PC-9 (cell line): ENCODE measurements at regions of chr15 and their contacts with region 1.

Region 1: DNA sequence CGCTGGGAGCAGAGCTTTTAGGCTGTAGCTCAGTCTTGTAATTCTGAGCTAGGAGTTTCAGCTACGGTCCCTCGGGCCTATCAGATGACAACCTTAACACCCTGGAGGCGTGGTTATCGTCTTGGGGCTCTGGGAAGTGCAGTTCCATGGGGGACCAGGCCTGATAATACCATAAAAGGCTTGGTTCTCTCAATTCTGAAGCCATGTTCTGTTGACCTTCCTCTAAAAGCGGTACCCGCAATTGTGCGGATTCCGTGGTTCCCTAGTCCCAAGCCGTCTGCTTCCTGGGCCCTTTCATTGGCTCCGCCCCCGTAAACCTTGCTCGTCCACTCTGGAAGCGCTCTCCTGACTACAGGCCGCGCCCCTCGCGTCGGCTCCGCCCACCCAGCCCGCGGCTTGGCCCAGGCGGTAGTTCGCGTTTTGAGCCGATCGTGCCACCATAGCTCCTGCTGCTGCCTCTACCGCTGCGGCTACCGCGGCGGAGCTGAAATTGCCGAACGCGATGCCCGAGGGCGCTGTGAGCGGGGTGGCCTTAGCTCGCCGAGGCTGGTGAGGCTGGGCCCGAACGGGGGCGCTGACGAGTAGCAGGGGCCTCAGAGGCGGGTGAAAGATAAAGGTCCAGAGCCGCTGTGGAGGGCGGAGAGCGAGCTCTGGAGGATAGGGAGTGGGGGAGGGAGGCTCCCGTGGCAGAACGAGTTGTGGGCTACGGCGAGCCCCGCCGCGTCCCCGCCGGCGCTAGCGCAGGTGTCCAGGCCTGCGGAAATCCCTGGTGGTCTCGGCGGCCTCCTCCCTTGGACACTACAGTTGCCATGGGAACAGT is at the start of gene MAPKBP1:
- DNase-seq: peak; percentile 86 to 98
- H3K4me3 ChIP-seq: peak within 1 kb of the TSS; percentile 80
- H3K27ac ChIP-seq: peak within 1 kb of the TSS; percentile 64
- H3K4me1 ChIP-seq: peaks cover 24% of the 10 kb centered on the region
- H3K27me3 ChIP-seq: no peaks in the 10 kb centered on the region
- CTCF ChIP-seq: peak; percentile 63
- total RNA-seq, gene MAPKBP1: 17.6 and 22.9 TPM in 2 replicates

Region 2: DNA sequence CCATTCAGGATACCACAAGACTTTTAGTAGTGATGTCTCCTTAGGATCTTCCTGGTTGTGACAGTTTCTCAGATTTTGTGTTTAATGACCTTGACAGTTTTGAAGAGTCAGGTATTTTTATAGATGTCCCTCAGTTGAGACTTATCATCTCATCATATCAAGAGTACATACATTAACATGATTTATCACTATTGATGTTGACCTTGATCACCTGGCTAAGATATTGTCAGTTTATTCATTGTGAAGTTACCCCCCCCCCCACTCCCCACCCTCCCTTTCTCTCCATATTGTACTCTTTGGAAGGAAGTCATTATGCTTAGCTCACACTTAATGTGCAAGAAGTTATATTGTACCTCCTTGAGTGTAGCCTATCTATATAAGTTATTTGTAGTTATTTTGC is 71.2 kb before region 1 on chr15:
- CTCF ChIA-PET with region 1: no interaction called
- POLR2A ChIA-PET with region 1: no interaction called
- intact Hi-C with region 1: no loop called
- DNase-seq: no peak
- H3K4me3 ChIP-seq: no peak overlapping the region
- H3K27ac ChIP-seq: no peak overlapping the region
- H3K4me1 ChIP-seq: no peaks in the 10 kb centered on the region
- H3K27me3 ChIP-seq: no peaks in the 10 kb centered on the region
- CTCF ChIP-seq: no peak

Region 3: DNA sequence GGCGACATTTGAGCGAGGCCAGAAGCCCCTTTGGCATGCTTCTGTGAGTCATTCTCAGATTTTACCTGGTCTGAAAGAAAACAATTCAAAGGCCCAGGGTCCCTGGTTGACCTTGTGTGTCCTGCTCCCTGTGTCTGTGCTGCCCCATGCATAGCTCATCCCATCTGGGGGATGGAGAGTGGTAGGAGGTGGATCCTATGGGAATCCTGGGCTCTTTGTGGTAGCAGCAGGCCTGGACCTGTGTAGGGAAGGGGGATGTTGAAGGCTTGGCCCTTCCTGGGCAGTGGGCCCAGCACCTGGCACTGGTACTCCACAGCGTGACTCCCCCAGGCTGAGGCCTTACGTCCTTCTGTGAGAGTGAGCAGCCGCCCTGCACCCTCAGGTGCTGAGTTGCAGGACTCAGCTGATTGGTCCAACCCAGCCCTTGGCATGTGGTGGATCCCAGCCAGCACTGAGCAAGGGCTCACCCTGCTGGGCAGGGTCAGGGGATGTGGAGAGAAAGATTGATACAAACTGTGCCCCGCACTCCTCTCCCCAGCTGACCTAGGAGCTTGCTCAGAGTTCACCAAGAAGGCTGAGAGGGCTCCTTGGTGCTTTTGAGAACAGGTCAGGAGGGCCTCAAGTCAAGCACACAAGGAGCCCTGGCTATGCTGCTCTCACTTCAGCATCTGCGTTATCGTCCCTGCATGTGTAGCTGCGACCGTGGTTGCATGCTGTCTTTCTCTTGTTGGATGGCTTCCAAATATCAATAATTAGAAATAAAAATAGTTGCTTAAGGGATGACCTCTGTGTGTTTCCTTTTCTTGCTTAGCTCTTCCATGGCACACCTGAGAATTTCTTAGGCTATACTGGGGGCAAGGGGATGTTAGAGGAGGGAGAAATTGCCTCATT is 32.3 kb after region 1 on chr15:
- CTCF ChIA-PET with region 1: interaction called, 21 read pairs
- POLR2A ChIA-PET with region 1: no interaction called
- intact Hi-C with region 1: loop called (anchors 1 kb)
- DNase-seq: peak in 1 of 2 experiments; percentile 52
- H3K4me3 ChIP-seq: no peak overlapping the region
- H3K27ac ChIP-seq: no peak overlapping the region
- H3K4me1 ChIP-seq: no peaks in the 10 kb centered on the region
- H3K27me3 ChIP-seq: no peaks in the 10 kb centered on the region
- CTCF ChIP-seq: no peak

Region 4: GRCh38 chr15:41827880-41828806 is 53.9 kb after region 1 on chr15 and contains the start of gene JMJD7:
- CTCF ChIA-PET with region 1: interaction called, 5 read pairs
- POLR2A ChIA-PET with region 1: interaction called, 10 read pairs
- intact Hi-C with region 1: no loop called
- DNase-seq: peak; percentile 51 to 93
- H3K4me3 ChIP-seq: peak within 1 kb of the TSS; percentile 81
- H3K27ac ChIP-seq: no peak within 1 kb of the TSS
- H3K4me1 ChIP-seq: peaks cover 16% of the 10 kb centered on the region
- H3K27me3 ChIP-seq: no peaks in the 10 kb centered on the region
- CTCF ChIP-seq: no peak
- total RNA-seq, gene JMJD7: 6.5 and 11.7 TPM in 2 replicates

Region 5: DNA sequence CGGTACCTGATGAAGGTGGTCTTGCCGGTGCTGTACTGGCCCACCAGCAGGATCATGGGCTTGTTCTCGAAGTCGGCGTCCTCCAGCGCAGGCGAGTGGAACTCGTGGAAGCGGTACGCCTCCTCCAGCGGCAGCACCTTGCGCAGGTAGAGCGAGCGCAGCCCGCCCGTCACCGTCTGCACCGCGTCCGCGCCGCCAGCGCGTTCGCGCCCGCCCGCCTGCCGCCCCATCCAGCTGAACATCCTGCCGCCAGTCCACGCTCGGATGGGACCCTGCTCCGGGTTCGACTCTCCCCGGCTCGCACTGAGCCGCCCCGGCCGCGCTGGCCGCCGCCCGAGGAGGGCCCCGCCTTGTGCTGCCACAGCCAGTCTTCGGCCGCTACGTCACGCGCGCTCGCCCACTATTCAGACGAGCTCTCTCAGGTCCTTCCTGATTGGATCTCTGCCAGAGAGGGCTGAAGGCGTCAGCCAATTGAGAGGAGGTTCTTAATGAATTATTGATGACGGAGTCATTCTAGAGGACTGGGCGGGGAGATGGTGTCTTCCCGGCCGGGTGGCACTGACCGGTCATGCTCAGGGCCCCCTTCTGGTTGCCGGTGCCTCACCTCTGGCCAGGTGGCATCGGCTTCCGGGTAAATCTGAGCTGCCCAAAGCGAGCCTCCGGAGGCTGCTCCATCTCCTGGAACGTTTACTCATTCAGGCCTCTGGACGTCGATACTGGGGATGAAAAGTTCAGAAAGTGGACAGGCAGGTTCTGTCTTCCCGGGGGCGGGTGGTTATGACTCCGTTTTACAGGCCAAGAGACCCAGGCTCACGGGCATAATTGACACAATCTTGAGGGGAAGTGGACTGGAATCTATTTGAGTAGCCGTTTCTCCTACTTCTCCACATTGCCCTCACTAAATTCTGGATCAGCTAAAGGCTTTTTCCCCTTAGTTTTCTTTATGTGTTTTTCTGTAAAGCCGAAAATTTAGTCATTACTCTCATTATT is 198.3 kb after region 1 on chr15 and contains the start of gene EHD4:
- CTCF ChIA-PET with region 1: interaction called, 7 read pairs
- POLR2A ChIA-PET with region 1: no interaction called
- intact Hi-C with region 1: loop called (anchors 2 kb)
- DNase-seq: peak; percentile 96
- H3K4me3 ChIP-seq: peak within 1 kb of the TSS; percentile 77
- H3K27ac ChIP-seq: peak within 1 kb of the TSS; percentile 92
- H3K4me1 ChIP-seq: peaks cover 28% of the 10 kb centered on the region
- H3K27me3 ChIP-seq: no peaks in the 10 kb centered on the region
- CTCF ChIP-seq: no peak; the same call in 1 of the 2 replicates
- total RNA-seq, gene EHD4: 15.4 and 18.1 TPM in 2 replicates

Region 6: GRCh38 chr15:42137431-42138261 is 363.4 kb after region 1 on chr15:
- CTCF ChIA-PET with region 1: interaction called, 4 read pairs
- POLR2A ChIA-PET with region 1: no interaction called
- intact Hi-C with region 1: loop called (anchors 5 kb)
- DNase-seq: no peak
- H3K4me3 ChIP-seq: no peak overlapping the region
- H3K27ac ChIP-seq: no peak overlapping the region
- H3K4me1 ChIP-seq: 0 out of 2 replicates have a peak, but pooled peaks cover under 1% of the 10 kb centered on the region
- H3K27me3 ChIP-seq: no peaks in the 10 kb centered on the region
- CTCF ChIP-seq: peak; percentile 70

Region 7: DNA sequence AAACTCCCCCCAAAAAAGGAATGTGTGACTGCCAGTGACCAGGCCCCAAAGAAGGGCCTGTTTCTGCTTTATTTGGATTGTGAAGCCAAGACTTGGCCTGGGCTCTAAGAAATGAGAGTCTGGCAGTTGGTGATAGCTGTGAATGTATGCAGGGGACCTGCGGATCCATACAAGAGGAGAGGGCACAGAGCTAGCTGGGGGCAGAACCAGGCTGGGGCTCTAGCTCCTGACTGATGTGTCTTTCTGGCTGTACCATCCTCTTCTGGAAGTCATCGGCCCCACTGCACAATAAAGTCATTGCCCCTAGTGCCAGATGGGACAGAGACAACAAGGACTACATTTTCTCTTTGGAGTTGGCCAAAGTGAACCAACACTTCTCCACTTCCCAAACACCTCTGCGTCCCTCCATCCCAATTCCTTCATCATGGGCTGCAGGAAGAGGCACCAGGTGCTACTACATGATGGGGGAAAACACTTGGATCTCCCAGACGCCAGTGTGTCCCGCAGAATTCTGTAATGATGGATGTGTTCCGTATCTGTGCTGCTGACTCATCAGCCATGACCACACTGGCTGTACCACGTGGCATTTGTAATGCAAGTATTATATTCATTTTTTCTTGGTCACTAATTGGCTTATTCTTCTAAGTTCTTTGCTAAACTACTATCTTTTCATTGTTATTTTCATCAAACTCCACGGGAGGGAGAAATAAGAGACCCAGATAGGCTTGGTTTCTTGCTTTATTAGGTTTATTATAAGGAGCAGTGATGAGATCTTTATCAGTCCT is 383.9 kb after region 1 on chr15:
- CTCF ChIA-PET with region 1: no interaction called
- POLR2A ChIA-PET with region 1: no interaction called
- intact Hi-C with region 1: no loop called
- DNase-seq: no peak
- H3K4me3 ChIP-seq: no peak overlapping the region
- H3K27ac ChIP-seq: no peak overlapping the region
- H3K4me1 ChIP-seq: peaks cover 17% of the 10 kb centered on the region
- H3K27me3 ChIP-seq: no peaks in the 10 kb centered on the region
- CTCF ChIP-seq: no peak

Region 8: GRCh38 chr15:43150191-43150929 is 1376.1 kb after region 1 on chr15:
- CTCF ChIA-PET with region 1: no interaction called
- POLR2A ChIA-PET with region 1: no interaction called
- intact Hi-C with region 1: no loop called
- DNase-seq: peak; percentile 33 to 79
- H3K4me3 ChIP-seq: no peak overlapping the region
- H3K27ac ChIP-seq: peak overlapping the region; percentile 63
- H3K4me1 ChIP-seq: peaks cover 4% of the 10 kb centered on the region; the same call in 1 of the 2 replicates
- H3K27me3 ChIP-seq: no peaks in the 10 kb centered on the region
- CTCF ChIP-seq: no peak